ENCODE measurements at regions of chr9 and their contacts with region 1.

Region 1: GRCh38 chr9:72540348-72540873 is 19.0 kb downstream of the TMC1 start:
- DNase-seq: no peak
- H3K4me3 Mint-ChIP-seq: no peak overlapping the region
- H3K27ac Mint-ChIP-seq: no peak overlapping the region
- H3K4me1 Mint-ChIP-seq: peaks cover 36% of the 10 kb centered on the region
- H3K27me3 Mint-ChIP-seq: no peaks in the 10 kb centered on the region

Region 2: GRCh38 chr9:72509635-72510034 is 30.8 kb before region 1 on chr9:
- intact Hi-C with region 1: loop called (anchors 1 kb)
- DNase-seq: no peak
- H3K4me3 Mint-ChIP-seq: peak overlapping the region; percentile 38
- H3K27ac Mint-ChIP-seq: peak overlapping the region; percentile 79
- H3K4me1 Mint-ChIP-seq: peaks cover 20% of the 10 kb centered on the region
- H3K27me3 Mint-ChIP-seq: no peaks in the 10 kb centered on the region

Region 3: GRCh38 chr9:72661401-72662135 is 121.2 kb after region 1 on chr9:
- intact Hi-C with region 1: no loop called
- DNase-seq: no peak
- H3K4me3 Mint-ChIP-seq: no peak overlapping the region
- H3K27ac Mint-ChIP-seq: no peak overlapping the region
- H3K4me1 Mint-ChIP-seq: no peaks in the 10 kb centered on the region
- H3K27me3 Mint-ChIP-seq: peaks cover 10% of the 10 kb centered on the region